BJ (cell line): ENCODE measurements at regions of chr11 and their contacts with region 1.

Region 1: DNA sequence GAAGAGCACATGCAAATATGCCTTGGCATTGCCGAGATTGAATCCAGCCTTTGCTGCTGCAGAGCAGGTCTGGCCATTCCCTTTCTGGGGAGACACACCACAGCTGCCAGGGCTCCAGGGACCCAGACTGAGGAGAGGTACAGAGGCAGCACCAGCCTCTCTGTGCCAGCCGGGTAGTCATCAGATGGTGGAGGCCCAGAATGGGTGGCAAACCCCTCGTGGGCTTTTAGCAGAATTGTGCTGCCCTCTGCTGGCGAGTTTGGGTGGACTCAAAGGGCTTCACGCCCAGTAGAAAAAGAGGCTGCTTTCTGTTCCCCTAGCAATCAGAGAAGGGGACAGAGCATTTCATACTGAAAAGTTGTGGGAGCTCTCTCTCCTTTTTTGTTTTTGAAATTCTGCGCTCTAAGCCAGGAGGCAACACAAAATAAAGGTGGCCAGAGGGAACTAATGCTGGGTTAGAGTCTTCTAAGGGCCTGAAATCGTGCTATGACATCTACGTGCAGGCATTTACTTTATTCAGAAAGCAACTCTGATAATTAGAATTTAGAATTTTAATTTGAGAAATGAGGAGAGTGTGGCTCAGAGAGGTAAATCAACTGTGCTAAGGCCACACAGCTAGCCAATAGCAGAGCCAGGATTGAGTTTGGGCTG is 158.8 kb upstream of the NAV2 start:
- DNase-seq: no peak
- H3K4me3 ChIP-seq: no peak overlapping the region
- H3K27me3 ChIP-seq: peaks cover 6% of the 10 kb centered on the region
- CTCF ChIP-seq: peak; percentile 83

Region 2: DNA sequence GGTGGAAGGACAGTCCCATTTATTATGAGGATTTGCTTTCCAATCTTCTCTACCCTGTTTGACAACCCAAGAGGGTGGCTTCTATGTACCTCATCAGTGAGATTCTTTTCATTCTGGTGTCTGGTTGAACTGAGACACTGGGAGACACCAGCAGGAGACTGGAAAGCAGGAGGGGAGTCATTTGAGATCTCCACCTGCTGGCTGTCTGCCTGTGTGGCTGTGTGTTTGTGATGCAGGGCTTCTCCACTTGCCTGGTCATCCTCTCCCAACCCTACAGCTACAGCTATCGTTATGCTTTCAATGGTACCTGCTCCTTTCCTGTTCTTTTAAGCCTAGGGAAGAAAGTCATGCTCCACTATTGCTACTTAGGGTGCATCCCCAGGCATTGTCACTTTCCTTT is 663.2 kb before region 1 on chr11:
- CTCF ChIA-PET with region 1: no interaction called
- POLR2A ChIA-PET with region 1: no interaction called
- DNase-seq: no peak
- H3K4me3 ChIP-seq: no peak overlapping the region
- H3K27me3 ChIP-seq: no peaks in the 10 kb centered on the region
- CTCF ChIP-seq: no peak

Region 3: GRCh38 chr11:19071255-19071654 is 482.6 kb before region 1 on chr11:
- CTCF ChIA-PET with region 1: interaction called, 68 read pairs
- POLR2A ChIA-PET with region 1: no interaction called
- DNase-seq: peak; percentile 36
- H3K4me3 ChIP-seq: 0 out of 2 replicates have a peak overlapping the region, but pooled peaks have one; percentile 3
- H3K27me3 ChIP-seq: peaks cover 3% of the 10 kb centered on the region; the same call in 1 of the 2 replicates
- CTCF ChIP-seq: peak; percentile 96

Region 4: GRCh38 chr11:19311308-19312030 is 242.3 kb before region 1 on chr11:
- CTCF ChIA-PET with region 1: interaction called, 27 read pairs
- POLR2A ChIA-PET with region 1: no interaction called
- DNase-seq: no peak
- H3K4me3 ChIP-seq: no peak overlapping the region
- H3K27me3 ChIP-seq: peaks cover 14% of the 10 kb centered on the region
- CTCF ChIP-seq: peak; percentile 94

Region 5: GRCh38 chr11:19541454-19542049 is 12.3 kb before region 1 on chr11:
- CTCF ChIA-PET with region 1: interaction called, 26 read pairs
- POLR2A ChIA-PET with region 1: no interaction called
- DNase-seq: no peak
- H3K4me3 ChIP-seq: no peak overlapping the region
- H3K27me3 ChIP-seq: peaks cover 11% of the 10 kb centered on the region
- CTCF ChIP-seq: no peak

Region 6: GRCh38 chr11:19742588-19743292 is 188.9 kb after region 1 on chr11:
- CTCF ChIA-PET with region 1: interaction called, 52 read pairs
- POLR2A ChIA-PET with region 1: no interaction called
- DNase-seq: no peak
- H3K4me3 ChIP-seq: no peak overlapping the region
- H3K27me3 ChIP-seq: no peaks in the 10 kb centered on the region
- CTCF ChIP-seq: peak; percentile 84

Region 7: DNA sequence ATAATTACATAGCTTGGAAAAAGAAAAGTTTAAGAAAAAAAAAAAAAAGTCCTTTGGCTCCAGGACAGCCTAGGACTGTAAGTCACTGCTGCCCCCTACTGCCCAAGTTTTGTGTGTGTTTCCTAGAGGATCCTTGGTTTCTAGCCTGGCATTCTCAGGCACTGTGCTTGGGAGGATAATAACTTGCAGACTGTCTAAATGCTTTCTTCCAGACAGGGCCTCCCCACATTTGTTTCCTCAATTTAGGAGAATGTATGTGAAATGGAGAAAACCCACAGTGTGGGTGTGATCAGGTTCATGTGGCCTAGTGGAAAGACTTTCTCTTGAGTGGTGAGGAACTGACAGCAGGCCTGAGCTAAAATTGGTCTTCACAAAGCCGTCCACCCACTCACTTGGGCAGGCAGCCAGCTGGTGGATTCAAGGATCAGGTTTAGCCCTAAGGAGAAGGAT is 349.8 kb after region 1 on chr11:
- CTCF ChIA-PET with region 1: interaction called, 119 read pairs
- POLR2A ChIA-PET with region 1: no interaction called
- DNase-seq: no peak
- H3K4me3 ChIP-seq: no peak overlapping the region
- H3K27me3 ChIP-seq: no peaks in the 10 kb centered on the region
- CTCF ChIP-seq: peak; percentile 88